Activated CD4-positive, alpha-beta T cell treated with anti-CD3 and anti-CD28 coated beads, Interleukin-2, amount 10 ng/mL, durations not matched to agents 24 days and 14 days (primary cell): ENCODE measurements at regions of chr5 and their contacts with region 1.

Region 1: DNA sequence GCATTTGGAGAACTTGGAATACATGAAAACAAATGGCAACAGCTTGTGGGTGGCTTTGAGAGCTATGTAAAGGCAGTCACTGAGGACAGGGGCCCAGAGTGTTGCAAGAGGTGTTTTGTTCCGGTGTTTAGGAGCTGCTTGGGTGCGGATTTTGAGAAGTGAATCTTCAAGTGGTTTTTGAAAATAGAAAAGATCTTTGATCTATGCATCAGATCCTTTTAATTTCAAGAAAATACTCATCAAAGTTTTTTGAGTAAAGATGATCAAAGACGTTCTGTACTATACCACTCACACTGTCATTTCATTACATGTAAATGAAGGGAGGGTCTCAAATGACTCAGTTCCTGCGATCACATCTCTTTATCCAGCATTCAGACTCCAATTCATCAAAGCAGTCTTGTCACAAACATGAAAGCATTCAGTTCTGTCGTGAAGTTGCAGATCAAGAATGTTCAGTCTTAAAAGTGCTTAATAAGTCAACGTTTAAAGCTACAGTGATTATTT is 112.5 kb downstream of the WDR41 start:
- DNase-seq: peak; percentile 81
- H3K4me3 Mint-ChIP-seq: peak overlapping the region; percentile 51
- H3K27ac Mint-ChIP-seq: peak overlapping the region; percentile 82
- H3K4me1 Mint-ChIP-seq: peaks cover 29% of the 10 kb centered on the region
- H3K27me3 Mint-ChIP-seq: no peaks in the 10 kb centered on the region

Region 2: DNA sequence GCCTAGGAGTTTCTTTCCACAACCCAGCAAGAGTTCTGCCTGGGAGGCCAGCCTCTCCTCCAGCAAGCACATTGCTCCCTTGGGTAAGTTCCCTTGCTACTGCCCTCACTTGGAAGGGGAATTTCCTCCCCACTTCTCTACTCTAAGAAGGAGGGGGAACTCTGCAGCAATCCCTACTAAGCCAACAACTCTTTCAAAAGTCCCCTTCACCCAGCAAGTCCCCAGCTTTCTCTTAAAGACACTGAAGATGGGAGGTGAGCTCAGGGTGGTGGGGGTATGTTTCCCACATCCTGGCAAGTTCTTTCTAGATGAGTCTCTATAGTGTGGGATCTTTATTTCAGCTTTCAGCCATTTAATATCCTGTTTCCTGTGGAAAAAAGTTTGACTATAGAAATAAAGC is 120.1 kb before region 1 on chr5:
- intact Hi-C with region 1: loop called (anchors 2 kb)
- DNase-seq: no peak
- H3K4me3 Mint-ChIP-seq: no peak overlapping the region
- H3K27ac Mint-ChIP-seq: peak overlapping the region; percentile 64
- H3K4me1 Mint-ChIP-seq: peaks cover 8% of the 10 kb centered on the region
- H3K27me3 Mint-ChIP-seq: peaks cover 13% of the 10 kb centered on the region

Region 3: GRCh38 chr5:77328930-77329647 is 50.5 kb before region 1 on chr5:
- intact Hi-C with region 1: loop called (anchors 1 kb)
- DNase-seq: peak; percentile 58
- H3K4me3 Mint-ChIP-seq: peak overlapping the region; percentile 39
- H3K27ac Mint-ChIP-seq: peak overlapping the region; percentile 78
- H3K4me1 Mint-ChIP-seq: peaks cover 29% of the 10 kb centered on the region
- H3K27me3 Mint-ChIP-seq: peaks cover 4% of the 10 kb centered on the region

Region 4: GRCh38 chr5:77356740-77357139 is 22.9 kb before region 1 on chr5:
- intact Hi-C with region 1: loop called (anchors 1 kb)
- DNase-seq: peak; percentile 77
- H3K4me3 Mint-ChIP-seq: no peak overlapping the region
- H3K27ac Mint-ChIP-seq: peak overlapping the region; percentile 13
- H3K4me1 Mint-ChIP-seq: peaks cover 17% of the 10 kb centered on the region
- H3K27me3 Mint-ChIP-seq: peaks cover 14% of the 10 kb centered on the region

Region 5: DNA sequence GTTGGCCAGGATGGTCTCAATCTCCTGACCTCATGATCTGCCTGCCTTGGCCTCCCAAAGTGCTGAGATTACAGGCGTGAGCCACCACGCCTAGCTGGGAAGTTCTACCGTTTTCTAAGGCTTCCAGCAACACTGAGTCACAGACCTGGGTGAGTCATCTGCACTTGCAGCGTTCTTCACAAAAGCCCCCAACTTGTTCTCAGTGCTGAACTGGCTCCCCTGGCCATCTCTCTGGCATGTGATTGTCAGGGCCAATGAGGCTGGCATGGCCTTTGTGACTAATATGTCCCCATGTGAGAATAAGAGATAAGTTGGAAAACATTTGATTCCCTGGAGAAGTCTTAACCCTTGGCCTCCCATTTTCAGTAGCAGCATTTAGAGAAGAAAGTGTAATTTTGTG is 11.9 kb before region 1 on chr5:
- intact Hi-C with region 1: no loop called
- DNase-seq: no peak
- H3K4me3 Mint-ChIP-seq: no peak overlapping the region
- H3K27ac Mint-ChIP-seq: no peak overlapping the region
- H3K4me1 Mint-ChIP-seq: no peaks in the 10 kb centered on the region
- H3K27me3 Mint-ChIP-seq: no peaks in the 10 kb centered on the region

Region 6: GRCh38 chr5:77418601-77419591 is 39.3 kb after region 1 on chr5:
- intact Hi-C with region 1: no loop called
- DNase-seq: no peak
- H3K4me3 Mint-ChIP-seq: no peak overlapping the region
- H3K27ac Mint-ChIP-seq: no peak overlapping the region
- H3K4me1 Mint-ChIP-seq: no peaks in the 10 kb centered on the region
- H3K27me3 Mint-ChIP-seq: peaks cover 2% of the 10 kb centered on the region

Region 7: DNA sequence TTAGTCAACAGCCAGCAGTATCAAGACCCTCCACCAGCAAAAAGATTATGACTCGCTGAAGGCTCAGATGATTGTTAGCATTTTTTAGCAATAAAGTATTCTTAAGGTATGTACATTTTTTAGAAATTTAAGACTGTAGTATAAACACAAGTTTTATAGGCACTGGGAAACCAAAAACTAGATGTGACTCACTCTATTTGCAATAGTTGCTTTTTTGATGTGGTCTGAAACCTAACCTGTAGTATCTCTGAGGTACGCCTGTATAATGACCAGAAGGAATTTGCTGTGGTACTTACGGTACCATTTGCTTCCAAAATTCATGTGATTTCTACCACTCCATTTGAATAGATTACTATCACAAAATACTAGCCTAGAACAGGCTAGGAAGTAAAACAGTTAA is 51.7 kb after region 1 on chr5:
- intact Hi-C with region 1: loop called (anchors 5 kb)
- DNase-seq: no peak
- H3K4me3 Mint-ChIP-seq: no peak overlapping the region
- H3K27ac Mint-ChIP-seq: no peak overlapping the region
- H3K4me1 Mint-ChIP-seq: peaks cover 9% of the 10 kb centered on the region
- H3K27me3 Mint-ChIP-seq: no peaks in the 10 kb centered on the region